PC-3 (cell line): ENCODE measurements at regions of chr6 and their contacts with region 1.

Region 1: GRCh38 chr6:111873178-111874024 is at the start of gene FYN:
- DNase-seq: peak; percentile 93
- ATAC-seq: peak; percentile 85
- H3K4me3 ChIP-seq: peak within 1 kb of the TSS; percentile 71
- H3K27ac ChIP-seq: peak within 1 kb of the TSS; percentile 0; the same call in 1 of the 2 replicates
- H3K4me1 ChIP-seq: peaks cover 18% of the 10 kb centered on the region
- H3K27me3 ChIP-seq: no peaks in the 10 kb centered on the region
- CTCF ChIP-seq: no peak
- total RNA-seq, gene FYN: 27.6 and 57.4 TPM in 2 replicates

Region 2: DNA sequence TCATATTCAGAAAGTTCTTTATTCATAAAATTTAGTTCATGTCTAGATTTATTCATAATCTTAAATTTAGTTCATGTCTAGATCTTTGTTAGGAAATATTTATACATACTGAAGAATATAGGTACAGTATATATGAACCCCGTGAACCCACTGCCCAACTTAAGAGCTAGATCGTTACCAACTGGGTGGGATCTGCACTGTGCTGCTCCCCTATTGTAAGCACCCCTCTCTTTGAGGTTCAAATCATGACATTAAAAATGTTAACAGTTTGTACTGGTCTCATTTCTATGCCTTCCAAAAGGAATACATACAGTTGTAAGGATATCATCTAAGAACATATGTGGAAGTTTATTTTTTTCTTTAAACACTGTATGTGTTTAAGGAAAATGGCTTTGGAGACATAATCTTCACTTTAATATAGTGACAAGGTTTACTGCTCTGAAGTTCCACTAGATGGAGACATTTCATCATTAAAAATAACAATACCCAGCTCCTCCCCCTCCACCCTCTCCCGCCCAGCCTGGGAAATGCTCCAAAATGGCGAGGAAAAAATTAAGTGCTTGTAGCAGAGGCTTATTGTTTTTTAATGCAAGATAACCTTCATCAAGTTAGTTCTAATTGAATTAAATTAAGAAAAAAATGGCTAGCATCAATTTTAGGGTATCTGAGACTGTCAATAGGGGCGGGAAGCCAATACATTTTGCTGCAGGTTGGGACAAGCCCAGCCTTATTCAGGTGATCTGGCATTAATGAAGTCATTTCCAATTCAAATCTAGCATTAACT is 163.6 kb before region 1 on chr6:
- CTCF ChIA-PET with region 1: no interaction called
- POLR2A ChIA-PET with region 1: no interaction called
- intact Hi-C with region 1: loop called (anchors 5 kb)
- DNase-seq: peak; percentile 71
- ATAC-seq: peak; percentile 81
- H3K4me3 ChIP-seq: peak overlapping the region; percentile 30; the same call in 1 of the 2 replicates
- H3K27ac ChIP-seq: no peak overlapping the region
- H3K4me1 ChIP-seq: peaks cover 4% of the 10 kb centered on the region; the same call in 1 of the 2 replicates
- H3K27me3 ChIP-seq: no peaks in the 10 kb centered on the region
- CTCF ChIP-seq: peak; percentile 69

Region 3: GRCh38 chr6:111812060-111813038 is 61.1 kb before region 1 on chr6:
- CTCF ChIA-PET with region 1: no interaction called
- POLR2A ChIA-PET with region 1: interaction called, 3 read pairs
- intact Hi-C with region 1: loop called (anchors 5 kb)
- DNase-seq: peak; percentile 77
- ATAC-seq: peak; percentile 77
- H3K4me3 ChIP-seq: peak overlapping the region; percentile 37; the same call in 1 of the 2 replicates
- H3K27ac ChIP-seq: peak overlapping the region; percentile 91
- H3K4me1 ChIP-seq: peaks cover 40% of the 10 kb centered on the region
- H3K27me3 ChIP-seq: no peaks in the 10 kb centered on the region
- CTCF ChIP-seq: no peak

Region 4: GRCh38 chr6:111997078-111997852 is 123.9 kb after region 1 on chr6:
- CTCF ChIA-PET with region 1: no interaction called
- POLR2A ChIA-PET with region 1: no interaction called
- intact Hi-C with region 1: loop called (anchors 1 kb)
- DNase-seq: peak; percentile 76
- ATAC-seq: peak; percentile 87
- H3K4me3 ChIP-seq: peak overlapping the region; percentile 21; the same call in 1 of the 2 replicates
- H3K27ac ChIP-seq: no peak overlapping the region
- H3K4me1 ChIP-seq: peaks cover 24% of the 10 kb centered on the region
- H3K27me3 ChIP-seq: no peaks in the 10 kb centered on the region
- CTCF ChIP-seq: peak; percentile 82

Region 5: GRCh38 chr6:113642714-113643406 is 1769.5 kb after region 1 on chr6:
- CTCF ChIA-PET with region 1: interaction called, 10 read pairs
- POLR2A ChIA-PET with region 1: no interaction called
- intact Hi-C with region 1: no loop called
- DNase-seq: peak; percentile 67
- ATAC-seq: peak; percentile 76
- H3K4me3 ChIP-seq: no peak overlapping the region
- H3K27ac ChIP-seq: peak overlapping the region; percentile 39
- H3K4me1 ChIP-seq: peaks cover 35% of the 10 kb centered on the region
- H3K27me3 ChIP-seq: no peaks in the 10 kb centered on the region
- CTCF ChIP-seq: no peak